WTC11 (cell line): ENCODE measurements at regions of chr19 and their contacts with region 1.

Region 1: GRCh38 chr19:15418588-15419412 is at the start of gene AKAP8L:
- DNase-seq: peak; percentile 99
- ATAC-seq: peak; percentile 97
- H3K4me3 Mint-ChIP-seq: peak within 1 kb of the TSS; percentile 95
- H3K27ac Mint-ChIP-seq: peak within 1 kb of the TSS; percentile 94
- H3K4me1 Mint-ChIP-seq: peaks cover 14% of the 10 kb centered on the region
- H3K27me3 Mint-ChIP-seq: no peaks in the 10 kb centered on the region
- CTCF ChIP-seq: no peak
- total RNA-seq, gene AKAP8L: 184 to 231 TPM (median 184 TPM) in 3 replicates

Region 2: GRCh38 chr19:15195371-15196334 is 223.1 kb before region 1 on chr19:
- CTCF ChIA-PET with region 1: interaction called, 13 read pairs
- POLR2A ChIA-PET with region 1: interaction called, 4 read pairs
- DNase-seq: peak; percentile 97
- ATAC-seq: peak; percentile 58
- H3K4me3 Mint-ChIP-seq: peak overlapping the region; percentile 77
- H3K27ac Mint-ChIP-seq: 0 out of 2 replicates have a peak overlapping the region, but pooled peaks have one; percentile 70
- H3K4me1 Mint-ChIP-seq: peaks cover 31% of the 10 kb centered on the region
- H3K27me3 Mint-ChIP-seq: no peaks in the 10 kb centered on the region
- CTCF ChIP-seq: no peak

Region 3: GRCh38 chr19:15379083-15379995 is 39.5 kb before region 1 on chr19 and contains the start of gene AKAP8:
- CTCF ChIA-PET with region 1: interaction called, 21 read pairs
- POLR2A ChIA-PET with region 1: interaction called, 31 read pairs
- DNase-seq: peak; percentile 98
- ATAC-seq: peak; percentile 89
- H3K4me3 Mint-ChIP-seq: peak within 1 kb of the TSS; percentile 99
- H3K27ac Mint-ChIP-seq: peak within 1 kb of the TSS; percentile 98
- H3K4me1 Mint-ChIP-seq: peaks cover 29% of the 10 kb centered on the region
- H3K27me3 Mint-ChIP-seq: no peaks in the 10 kb centered on the region
- CTCF ChIP-seq: no peak
- total RNA-seq, gene AKAP8: 49.1 to 65.9 TPM (median 51.3 TPM) in 3 replicates

Region 4: GRCh38 chr19:15432629-15433518 is 14.1 kb after region 1 on chr19:
- CTCF ChIA-PET with region 1: interaction called, 22 read pairs
- POLR2A ChIA-PET with region 1: interaction called, 22 read pairs
- DNase-seq: peak; percentile 93
- ATAC-seq: peak; percentile 73
- H3K4me3 Mint-ChIP-seq: peak overlapping the region; percentile 98
- H3K27ac Mint-ChIP-seq: peak overlapping the region; percentile 97
- H3K4me1 Mint-ChIP-seq: peaks cover 19% of the 10 kb centered on the region
- H3K27me3 Mint-ChIP-seq: no peaks in the 10 kb centered on the region; the same call in 1 of the 2 replicates
- CTCF ChIP-seq: no peak

Region 5: GRCh38 chr19:15449620-15450527 is 31.1 kb after region 1 on chr19 and contains the start of gene WIZ:
- CTCF ChIA-PET with region 1: interaction called, 33 read pairs
- POLR2A ChIA-PET with region 1: interaction called, 20 read pairs
- DNase-seq: peak; percentile 80
- ATAC-seq: 0 out of 2 replicates have a peak, but pooled peaks have one; percentile 0
- H3K4me3 Mint-ChIP-seq: peak within 1 kb of the TSS; percentile 75
- H3K27ac Mint-ChIP-seq: no peak within 1 kb of the TSS; the same call in 1 of the 2 replicates
- H3K4me1 Mint-ChIP-seq: peaks cover 16% of the 10 kb centered on the region
- H3K27me3 Mint-ChIP-seq: peaks cover 43% of the 10 kb centered on the region
- CTCF ChIP-seq: no peak
- total RNA-seq, gene WIZ: 37.6 to 43.9 TPM (median 40.6 TPM) in 3 replicates

Region 6: DNA sequence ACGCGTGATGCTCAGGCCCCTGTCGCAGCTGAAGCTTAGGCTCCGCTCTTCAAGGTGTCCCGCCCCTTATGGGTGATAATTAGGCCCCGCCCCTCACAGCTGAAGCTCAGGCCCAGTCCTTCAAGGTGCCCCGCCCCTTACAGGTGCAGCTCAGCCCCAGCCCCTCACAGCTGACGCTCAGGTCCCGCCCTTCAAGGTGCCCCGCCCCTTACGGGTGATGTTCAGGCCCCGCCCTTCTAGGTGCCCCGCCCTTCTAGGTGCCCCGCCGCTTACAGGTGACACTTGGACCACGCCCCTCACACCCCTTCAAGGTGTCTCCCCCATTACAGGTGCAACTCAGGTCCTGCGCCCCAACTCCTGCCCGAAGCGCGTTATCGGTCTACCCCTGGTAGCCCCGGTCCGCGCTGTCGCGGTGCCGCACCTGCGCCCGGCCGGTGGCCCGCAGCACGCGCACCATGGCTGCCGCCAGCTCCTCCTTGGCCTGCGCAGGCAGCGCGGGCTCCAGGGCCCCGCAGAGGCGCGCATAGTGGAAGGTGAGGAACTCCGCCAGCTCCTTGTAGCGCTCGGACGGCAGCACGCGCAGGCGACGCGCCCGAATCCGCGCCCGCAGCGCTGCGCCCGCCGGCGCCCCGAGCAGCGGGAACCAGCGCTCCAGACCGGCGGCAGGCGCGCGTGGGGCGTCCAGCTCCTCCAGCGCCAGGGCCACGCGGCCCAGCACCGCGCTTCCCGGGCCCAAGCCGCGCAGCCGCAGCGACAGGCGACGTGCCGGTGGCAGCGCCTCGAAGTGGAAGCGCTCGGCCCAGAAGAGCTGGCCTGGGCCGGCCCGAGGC is 38.3 kb after region 1 on chr19:
- CTCF ChIA-PET with region 1: interaction called, 33 read pairs
- POLR2A ChIA-PET with region 1: interaction called, 20 read pairs
- DNase-seq: peak; percentile 97
- ATAC-seq: peak; percentile 62
- H3K4me3 Mint-ChIP-seq: peak overlapping the region; percentile 56
- H3K27ac Mint-ChIP-seq: no peak overlapping the region
- H3K4me1 Mint-ChIP-seq: peaks cover 19% of the 10 kb centered on the region
- H3K27me3 Mint-ChIP-seq: peaks cover 92% of the 10 kb centered on the region
- CTCF ChIP-seq: no peak

Region 7: DNA sequence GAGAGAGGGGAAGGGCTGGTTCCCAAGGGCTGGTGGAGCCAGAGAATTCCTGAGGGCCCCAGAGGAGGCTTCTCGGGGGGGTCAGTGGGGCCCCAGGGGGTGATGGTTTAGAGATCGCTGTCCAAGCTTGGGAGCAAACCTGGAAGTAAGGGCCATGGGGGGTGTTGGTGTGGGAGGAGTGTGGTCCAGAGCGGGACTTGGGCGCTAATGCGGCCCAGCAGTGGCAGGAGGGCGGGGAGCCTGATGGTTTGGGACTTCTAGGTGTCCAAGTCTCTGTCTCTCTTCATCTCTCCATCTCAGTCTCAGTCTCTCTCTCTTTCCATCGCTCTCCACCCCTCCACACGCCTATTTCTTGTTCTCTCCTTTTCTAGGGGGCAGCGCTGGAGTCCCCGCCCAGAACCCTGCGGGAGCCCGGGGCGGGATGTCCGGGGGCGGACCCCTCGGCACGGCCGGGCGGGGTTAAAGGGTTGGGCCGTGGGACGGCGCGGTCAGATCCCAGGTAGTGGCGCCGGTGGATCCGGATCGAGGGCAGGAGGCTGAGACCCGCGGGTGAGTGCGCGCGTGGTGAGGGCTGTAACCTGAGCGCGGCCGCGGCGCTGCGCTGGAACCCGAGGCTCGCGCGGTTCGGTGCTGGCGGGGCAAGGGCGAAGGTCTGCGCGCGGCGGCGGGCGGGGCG is 89.4 kb after region 1 on chr19 and contains the start of gene CYP4F22:
- CTCF ChIA-PET with region 1: no interaction called
- POLR2A ChIA-PET with region 1: no interaction called
- DNase-seq: peak; percentile 44
- ATAC-seq: peak; percentile 79
- H3K4me3 Mint-ChIP-seq: peak within 1 kb of the TSS; percentile 72
- H3K27ac Mint-ChIP-seq: no peak within 1 kb of the TSS
- H3K4me1 Mint-ChIP-seq: 0 out of 2 replicates have a peak, but pooled peaks cover 3% of the 10 kb centered on the region
- H3K27me3 Mint-ChIP-seq: peaks cover 44% of the 10 kb centered on the region
- CTCF ChIP-seq: no peak
- total RNA-seq, gene CYP4F22: 1.2 to 1.7 TPM (median 1.5 TPM) in 3 replicates